Heart left ventricle (tissue), 16 donors: ENCODE measurements at regions of chr1 and their contacts with region 1.

Region 1: GRCh38 chr1:8423650-8424538 is 106.0 kb downstream of the SLC45A1 start:
- DNase-seq: peak; percentile 54 to 74 (median 64)
- ATAC-seq: peak; percentile 34 to 54 (median 49)
- H3K4me3 ChIP-seq: peak overlapping the region; percentile 64 to 98 (median 87)
- H3K27ac ChIP-seq: peak overlapping the region; percentile 93 to 100 (median 98)
- H3K4me1 ChIP-seq: peaks cover 0 to 83% (median 56%) of the 10 kb centered on the region in 12 donors
- H3K27me3 ChIP-seq: no peaks in the 10 kb centered on the region
- CTCF ChIP-seq: peak in 5 of 12 donors; percentile 10 to 27 (median 22)
- POLR2A ChIP-seq: peak in 1 of 2 donors; percentile 69

Region 2: GRCh38 chr1:8358904-8359603 is 64.8 kb before region 1 on chr1:
- intact Hi-C with region 1: loop called in 4 of 10 experiments (anchors 2 to 10 kb)
- DNase-seq: peak in 2 of 5 donors; percentile 11 to 59
- ATAC-seq: no peak
- H3K4me3 ChIP-seq: no peak overlapping the region
- H3K27ac ChIP-seq: peak overlapping the region in 6 of 12 donors; percentile 2 to 77 (median 32)
- H3K4me1 ChIP-seq: peaks cover 0 to 57% (median 36%) of the 10 kb centered on the region in 12 donors
- H3K27me3 ChIP-seq: no peaks in the 10 kb centered on the region
- CTCF ChIP-seq: no peak
- POLR2A ChIP-seq: no peak

Region 3: GRCh38 chr1:8374812-8375211 is 49.1 kb before region 1 on chr1:
- intact Hi-C with region 1: loop called in 6 of 10 experiments (anchors 2 to 5 kb)
- DNase-seq: no peak
- ATAC-seq: no peak
- H3K4me3 ChIP-seq: no peak overlapping the region
- H3K27ac ChIP-seq: peak overlapping the region; percentile 44 to 97 (median 90)
- H3K4me1 ChIP-seq: peaks cover 19 to 93% (median 82%) of the 10 kb centered on the region in 12 donors
- H3K27me3 ChIP-seq: no peaks in the 10 kb centered on the region
- CTCF ChIP-seq: peak; percentile 9 to 46 (median 30)
- POLR2A ChIP-seq: no peak

Region 4: GRCh38 chr1:8506456-8506855 is 82.6 kb after region 1 on chr1:
- intact Hi-C with region 1: no loop called
- DNase-seq: no peak
- ATAC-seq: peak in 1 of 4 donors; percentile 38
- H3K4me3 ChIP-seq: no peak overlapping the region
- H3K27ac ChIP-seq: no peak overlapping the region
- H3K4me1 ChIP-seq: peaks cover 2 to 35% (median 22%) of the 10 kb centered on the region in 12 donors
- H3K27me3 ChIP-seq: no peaks in the 10 kb centered on the region
- CTCF ChIP-seq: no peak
- POLR2A ChIP-seq: no peak

Region 5: GRCh38 chr1:8516793-8517556 is 93.1 kb after region 1 on chr1:
- intact Hi-C with region 1: loop called in 3 of 10 experiments (anchors 5 to 10 kb)
- DNase-seq: no peak
- ATAC-seq: no peak
- H3K4me3 ChIP-seq: no peak overlapping the region
- H3K27ac ChIP-seq: peak overlapping the region in 2 of 12 donors; percentile 10 to 14
- H3K4me1 ChIP-seq: peaks cover 0 to 46% (median 21%) of the 10 kb centered on the region in 12 donors
- H3K27me3 ChIP-seq: no peaks in the 10 kb centered on the region
- CTCF ChIP-seq: no peak
- POLR2A ChIP-seq: no peak

Region 6: DNA sequence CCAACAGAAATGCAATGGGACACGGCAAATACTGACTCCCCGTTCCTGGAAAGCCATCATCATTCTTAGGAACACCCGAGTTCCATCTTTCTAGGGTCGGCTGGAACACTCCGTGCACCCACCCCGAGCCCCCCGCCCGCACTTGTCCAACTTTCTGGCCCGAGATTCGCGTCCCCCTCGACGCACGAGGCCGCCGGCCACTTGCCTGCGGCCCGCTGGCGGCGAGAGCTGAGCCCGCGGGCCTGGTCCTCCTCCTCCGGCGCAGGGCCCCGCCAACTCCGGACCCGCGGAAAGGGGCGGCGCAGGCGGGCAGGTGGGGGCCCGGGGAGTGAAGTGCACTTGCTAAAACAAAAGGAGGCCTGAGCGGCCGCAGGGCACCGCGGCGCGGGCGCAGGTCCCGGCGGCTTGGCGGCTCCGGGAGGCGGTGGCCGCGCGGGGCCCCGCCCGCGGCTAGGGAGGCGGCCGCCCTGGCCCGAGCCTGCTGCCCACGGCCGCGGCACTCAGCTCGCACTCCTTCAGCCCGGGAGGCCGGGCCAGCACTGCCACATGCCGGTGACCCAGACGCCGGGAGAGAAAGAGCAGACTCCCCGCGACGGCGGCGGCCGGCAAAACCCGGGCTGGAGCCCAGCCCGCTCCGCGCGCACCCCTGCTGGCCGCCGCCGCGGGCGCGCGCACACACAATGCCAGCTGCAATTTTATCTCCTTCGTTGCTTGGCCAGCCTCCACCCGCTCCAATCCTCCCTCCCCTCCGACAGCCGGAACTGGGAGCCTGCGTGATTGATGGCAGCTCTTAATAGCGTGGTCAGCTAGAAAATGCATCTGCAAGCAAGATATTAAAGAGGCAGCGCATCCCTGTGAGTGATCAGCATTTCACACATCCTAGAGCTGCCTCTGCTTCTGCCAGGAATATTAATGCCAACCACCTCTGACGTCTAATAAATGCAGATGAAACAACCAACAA is 279.2 kb after region 1 on chr1:
- intact Hi-C with region 1: loop called in 3 of 10 experiments (anchors 5 to 10 kb)
- DNase-seq: peak; percentile 90 to 95 (median 94)
- ATAC-seq: peak; percentile 83 to 98 (median 96)
- H3K4me3 ChIP-seq: peak overlapping the region; percentile 52 to 86 (median 72)
- H3K27ac ChIP-seq: peak overlapping the region; percentile 28 to 93 (median 86)
- H3K4me1 ChIP-seq: peaks cover 3 to 66% (median 43%) of the 10 kb centered on the region in 12 donors
- H3K27me3 ChIP-seq: no peaks in the 10 kb centered on the region
- CTCF ChIP-seq: peak in 6 of 12 donors; percentile 18 to 43 (median 24)
- POLR2A ChIP-seq: peak in 1 of 2 donors; percentile 77